A673 (cell line): ENCODE measurements at regions of chr13 and their contacts with region 1.

Region 1: DNA sequence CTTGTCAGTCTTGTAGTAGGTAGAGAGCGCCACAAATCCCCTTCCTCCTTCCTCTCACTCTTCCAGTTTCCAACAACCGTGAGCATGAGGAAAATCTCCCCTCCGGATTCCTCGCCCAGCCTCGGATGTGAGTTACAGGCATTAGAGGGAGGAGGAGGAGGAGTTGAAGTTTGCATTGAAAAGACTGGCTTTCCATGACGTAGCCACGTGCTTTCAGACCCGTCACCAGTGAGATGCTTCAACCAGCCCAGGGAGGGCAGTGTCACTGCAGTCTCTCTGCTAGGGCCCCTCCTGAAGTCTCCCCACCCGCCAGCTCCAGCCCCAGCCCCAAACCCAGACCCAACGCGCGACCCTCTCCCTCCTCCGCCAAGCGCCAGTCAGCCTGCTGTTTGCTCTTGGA is 442 bp upstream of the FGF14 start:
- DNase-seq: peak; percentile 95
- H3K4me3 ChIP-seq: peak overlapping the region; percentile 81
- H3K27ac ChIP-seq: peak overlapping the region; percentile 82
- H3K4me1 ChIP-seq: peaks cover 12% of the 10 kb centered on the region
- H3K27me3 ChIP-seq: no peaks in the 10 kb centered on the region
- CTCF ChIP-seq: peak; percentile 53

Region 2: GRCh38 chr13:101465877-101466276 is 936.4 kb before region 1 on chr13:
- CTCF ChIA-PET with region 1: no interaction called
- POLR2A ChIA-PET with region 1: no interaction called
- intact Hi-C with region 1: no loop called
- DNase-seq: no peak
- H3K4me3 ChIP-seq: no peak overlapping the region
- H3K27ac ChIP-seq: no peak overlapping the region
- H3K4me1 ChIP-seq: no peaks in the 10 kb centered on the region
- H3K27me3 ChIP-seq: no peaks in the 10 kb centered on the region
- CTCF ChIP-seq: no peak

Region 3: GRCh38 chr13:101673360-101674105 is 728.8 kb before region 1 on chr13:
- CTCF ChIA-PET with region 1: no interaction called
- POLR2A ChIA-PET with region 1: no interaction called
- intact Hi-C with region 1: no loop called
- DNase-seq: no peak
- H3K4me3 ChIP-seq: no peak overlapping the region
- H3K27ac ChIP-seq: no peak overlapping the region
- H3K4me1 ChIP-seq: no peaks in the 10 kb centered on the region
- H3K27me3 ChIP-seq: no peaks in the 10 kb centered on the region
- CTCF ChIP-seq: no peak

Region 4: DNA sequence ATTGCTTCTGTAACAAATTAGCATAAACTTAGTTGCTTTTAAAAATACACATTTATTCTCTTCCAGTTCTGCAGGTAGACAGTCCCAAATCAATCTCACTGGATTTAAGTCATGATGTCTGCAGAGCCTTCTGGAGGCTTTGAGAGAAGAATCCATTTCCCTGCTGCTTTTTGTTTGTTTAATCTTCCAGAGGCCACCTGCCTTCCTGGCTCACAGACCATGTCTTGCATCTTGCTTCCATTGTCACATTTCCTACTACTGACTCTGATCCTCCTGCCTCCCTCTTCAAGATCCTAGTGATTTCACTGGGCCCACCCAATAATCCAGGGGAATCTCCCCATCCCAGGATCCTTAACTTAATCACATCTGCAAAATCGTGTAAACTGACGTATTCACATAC is 476.6 kb before region 1 on chr13:
- CTCF ChIA-PET with region 1: no interaction called
- POLR2A ChIA-PET with region 1: no interaction called
- intact Hi-C with region 1: no loop called
- DNase-seq: no peak
- H3K4me3 ChIP-seq: no peak overlapping the region
- H3K27ac ChIP-seq: no peak overlapping the region
- H3K4me1 ChIP-seq: peaks cover 6% of the 10 kb centered on the region
- H3K27me3 ChIP-seq: peaks cover 3% of the 10 kb centered on the region
- CTCF ChIP-seq: no peak

Region 5: GRCh38 chr13:102141625-102142472 is 260.4 kb before region 1 on chr13:
- CTCF ChIA-PET with region 1: no interaction called
- POLR2A ChIA-PET with region 1: no interaction called
- intact Hi-C with region 1: loop called (anchors 5 kb)
- DNase-seq: peak; percentile 66
- H3K4me3 ChIP-seq: no peak overlapping the region
- H3K27ac ChIP-seq: no peak overlapping the region
- H3K4me1 ChIP-seq: peaks cover 23% of the 10 kb centered on the region
- H3K27me3 ChIP-seq: no peaks in the 10 kb centered on the region
- CTCF ChIP-seq: peak; percentile 87

Region 6: DNA sequence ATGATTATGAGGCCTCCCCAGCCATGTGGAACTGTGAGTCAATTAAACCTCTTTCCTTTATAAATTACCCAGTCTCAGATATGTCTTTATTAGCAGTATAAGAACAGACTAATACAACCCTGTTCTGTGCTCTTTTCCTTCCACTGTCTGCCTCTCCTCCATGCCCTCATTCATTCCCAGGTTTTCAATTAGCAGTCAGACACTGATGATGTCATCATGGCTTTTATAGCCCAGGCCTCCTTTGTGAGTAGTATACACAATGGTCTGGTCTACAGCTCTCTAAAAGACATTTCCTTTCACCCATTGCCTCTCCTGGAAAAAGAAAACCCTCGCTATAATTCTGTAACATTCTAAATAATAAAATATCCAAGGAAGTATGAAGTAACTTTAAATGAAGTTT is 26.0 kb before region 1 on chr13:
- CTCF ChIA-PET with region 1: no interaction called
- POLR2A ChIA-PET with region 1: no interaction called
- intact Hi-C with region 1: no loop called
- DNase-seq: no peak
- H3K4me3 ChIP-seq: no peak overlapping the region
- H3K27ac ChIP-seq: no peak overlapping the region
- H3K4me1 ChIP-seq: no peaks in the 10 kb centered on the region
- H3K27me3 ChIP-seq: no peaks in the 10 kb centered on the region
- CTCF ChIP-seq: no peak

Region 7: GRCh38 chr13:102441085-102441484 is 38.8 kb after region 1 on chr13:
- CTCF ChIA-PET with region 1: no interaction called
- POLR2A ChIA-PET with region 1: interaction called, 10 read pairs
- intact Hi-C with region 1: no loop called
- DNase-seq: no peak
- H3K4me3 ChIP-seq: no peak overlapping the region
- H3K27ac ChIP-seq: no peak overlapping the region
- H3K4me1 ChIP-seq: no peaks in the 10 kb centered on the region
- H3K27me3 ChIP-seq: no peaks in the 10 kb centered on the region
- CTCF ChIP-seq: no peak